PC-3 (cell line): ENCODE measurements at regions of chr4 and their contacts with region 1.

Region 1: DNA sequence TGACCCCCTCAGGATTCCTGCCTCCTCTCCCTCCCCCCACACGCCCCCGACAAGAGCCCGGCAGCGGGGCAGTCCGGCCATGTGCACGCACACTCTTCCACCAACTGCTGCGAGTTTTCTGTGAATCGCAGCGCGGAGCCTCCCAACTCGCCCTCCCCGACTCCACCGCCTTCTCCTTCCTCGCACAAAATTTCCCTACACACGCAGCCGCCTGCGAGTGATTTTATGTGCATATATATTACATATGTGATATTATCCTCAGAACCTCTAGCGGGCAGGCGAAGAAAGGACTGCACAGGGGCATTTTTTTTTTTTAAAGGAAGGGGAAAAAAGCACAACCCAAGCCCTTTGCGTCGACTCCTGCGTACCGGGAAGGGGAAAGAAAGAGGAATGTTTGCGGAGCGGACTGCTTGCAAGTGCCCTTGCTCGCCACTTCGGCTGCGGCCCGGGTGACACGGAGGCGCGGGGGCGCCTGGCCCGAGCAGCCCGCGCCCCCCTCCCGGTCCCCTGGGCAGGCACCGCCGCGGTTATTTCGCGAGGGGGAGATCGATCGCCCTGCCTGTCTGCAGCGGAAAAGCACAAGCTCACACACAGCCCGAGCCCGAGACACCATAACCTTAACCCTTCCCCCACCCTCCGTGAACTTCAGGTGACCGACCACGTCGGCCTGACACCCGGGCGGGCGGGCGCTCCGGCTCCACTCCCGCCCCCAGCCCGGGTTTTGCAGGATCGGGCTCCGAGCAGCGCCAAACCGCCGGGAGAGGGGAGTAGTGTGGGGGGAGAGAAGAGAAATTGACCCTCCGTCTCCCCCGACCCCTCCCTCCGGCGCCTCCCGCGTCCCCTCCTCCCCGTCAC is 2.3 kb downstream of the ZNF827 start:
- DNase-seq: peak; percentile 75
- ATAC-seq: peak; percentile 37
- H3K4me3 ChIP-seq: peak overlapping the region; percentile 84
- H3K27ac ChIP-seq: peak overlapping the region; percentile 75
- H3K4me1 ChIP-seq: peaks cover 31% of the 10 kb centered on the region
- H3K27me3 ChIP-seq: no peaks in the 10 kb centered on the region
- CTCF ChIP-seq: peak; percentile 47; the same call in 1 of the 2 replicates

Region 2: GRCh38 chr4:145234091-145234706 is 702.2 kb before region 1 on chr4:
- CTCF ChIA-PET with region 1: no interaction called
- POLR2A ChIA-PET with region 1: no interaction called
- intact Hi-C with region 1: loop called (anchors 5 kb)
- DNase-seq: peak; percentile 87
- ATAC-seq: peak; percentile 100
- H3K4me3 ChIP-seq: no peak overlapping the region
- H3K27ac ChIP-seq: no peak overlapping the region
- H3K4me1 ChIP-seq: 0 out of 2 replicates have a peak, but pooled peaks cover 5% of the 10 kb centered on the region
- H3K27me3 ChIP-seq: no peaks in the 10 kb centered on the region
- CTCF ChIP-seq: peak; percentile 98

Region 3: GRCh38 chr4:145785391-145786008 is 150.9 kb before region 1 on chr4:
- CTCF ChIA-PET with region 1: no interaction called
- POLR2A ChIA-PET with region 1: no interaction called
- intact Hi-C with region 1: loop called (anchors 5 kb)
- DNase-seq: peak; percentile 48
- ATAC-seq: peak; percentile 25; the same call in 1 of the 2 replicates
- H3K4me3 ChIP-seq: no peak overlapping the region
- H3K27ac ChIP-seq: peak overlapping the region; percentile 1; the same call in 1 of the 2 replicates
- H3K4me1 ChIP-seq: peaks cover 54% of the 10 kb centered on the region
- H3K27me3 ChIP-seq: no peaks in the 10 kb centered on the region
- CTCF ChIP-seq: no peak

Region 4: DNA sequence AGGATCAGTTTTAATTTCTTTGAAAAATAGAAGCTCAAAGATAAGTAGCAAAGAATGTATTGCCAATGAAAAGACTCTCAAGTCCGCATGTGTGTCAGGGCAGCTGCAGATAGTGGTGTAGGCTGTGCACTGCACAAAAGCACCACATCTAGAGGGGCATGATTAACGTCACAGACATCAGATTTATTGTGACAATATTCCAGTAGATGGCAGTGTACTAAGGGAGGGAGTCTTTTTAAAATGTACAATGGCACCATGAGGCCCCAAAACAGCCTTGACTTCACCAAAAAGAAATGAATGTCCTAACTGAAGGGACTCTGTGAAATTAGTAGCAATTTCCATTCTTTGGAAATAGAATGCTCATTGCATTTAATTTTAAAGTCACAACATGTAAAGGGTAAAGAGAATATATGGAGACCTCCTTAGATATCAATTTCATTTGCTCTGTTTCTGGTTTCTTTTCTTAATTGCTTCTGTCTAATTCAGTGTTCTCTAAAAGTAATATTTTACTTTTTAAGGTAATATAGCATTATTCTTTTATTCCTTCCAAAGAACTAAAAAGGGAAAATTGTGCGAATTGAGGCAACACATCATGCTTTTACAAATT is 96.1 kb before region 1 on chr4:
- CTCF ChIA-PET with region 1: no interaction called
- POLR2A ChIA-PET with region 1: no interaction called
- intact Hi-C with region 1: loop called (anchors 1 kb)
- DNase-seq: peak; percentile 82
- ATAC-seq: peak; percentile 90
- H3K4me3 ChIP-seq: no peak overlapping the region
- H3K27ac ChIP-seq: no peak overlapping the region
- H3K4me1 ChIP-seq: peaks cover 9% of the 10 kb centered on the region; the same call in 1 of the 2 replicates
- H3K27me3 ChIP-seq: no peaks in the 10 kb centered on the region
- CTCF ChIP-seq: peak; percentile 83

Region 5: GRCh38 chr4:146342600-146343192 is 406.3 kb after region 1 on chr4:
- CTCF ChIA-PET with region 1: no interaction called
- POLR2A ChIA-PET with region 1: no interaction called
- intact Hi-C with region 1: loop called (anchors 5 kb)
- DNase-seq: peak; percentile 78
- ATAC-seq: peak; percentile 27; the same call in 1 of the 2 replicates
- H3K4me3 ChIP-seq: no peak overlapping the region
- H3K27ac ChIP-seq: no peak overlapping the region
- H3K4me1 ChIP-seq: peaks cover 8% of the 10 kb centered on the region
- H3K27me3 ChIP-seq: no peaks in the 10 kb centered on the region
- CTCF ChIP-seq: peak; percentile 46